MCF 10A (cell line): ENCODE measurements at regions of chr9 and their contacts with region 1.

Region 1: DNA sequence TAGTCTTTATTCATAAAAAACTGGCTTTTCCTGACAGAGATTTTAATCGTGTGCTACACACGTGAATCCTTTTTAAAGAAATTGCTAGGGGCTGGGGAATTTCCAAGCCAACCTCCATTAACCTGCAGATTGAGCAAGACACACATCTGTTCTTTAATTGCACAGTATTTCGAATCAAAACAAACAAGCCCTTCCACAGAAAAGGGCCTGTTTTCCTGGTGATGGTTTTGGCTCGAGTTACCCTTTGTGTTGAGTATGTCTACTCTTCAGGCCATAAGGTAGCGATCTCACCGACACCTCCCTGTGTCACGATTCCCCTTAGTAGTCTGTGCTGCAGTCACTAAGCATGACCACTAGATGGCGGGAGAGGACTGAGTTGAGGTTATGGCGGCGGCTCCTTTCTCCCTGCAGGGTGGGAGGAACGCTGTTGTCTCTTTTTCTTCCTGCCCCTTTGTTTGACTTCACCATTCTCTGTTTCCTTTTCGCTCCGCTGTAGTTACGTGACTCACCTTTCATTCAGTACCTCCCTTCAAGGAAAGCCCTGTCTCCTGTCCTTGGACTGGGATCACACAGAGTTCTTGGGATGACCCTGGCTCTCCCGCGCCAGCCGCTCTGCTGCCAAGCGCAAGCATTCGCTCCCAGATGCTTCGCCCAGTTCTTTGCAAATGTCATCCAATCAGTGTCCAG is 137.1 kb upstream of the SLC24A2 start:
- DNase-seq: peak; percentile 80
- H3K4me3 Mint-ChIP-seq: peak overlapping the region; percentile 60
- H3K27ac Mint-ChIP-seq: no peak overlapping the region
- H3K4me1 Mint-ChIP-seq: no peaks in the 10 kb centered on the region
- H3K27me3 Mint-ChIP-seq: peaks cover 24% of the 10 kb centered on the region
- CTCF ChIP-seq: peak; percentile 95

Region 2: GRCh38 chr9:19313573-19313972 is 612.4 kb before region 1 on chr9:
- CTCF ChIA-PET with region 1: no interaction called
- POLR2A ChIA-PET with region 1: no interaction called
- intact Hi-C with region 1: no loop called
- DNase-seq: no peak
- H3K4me3 Mint-ChIP-seq: no peak overlapping the region
- H3K27ac Mint-ChIP-seq: peak overlapping the region; percentile 25
- H3K4me1 Mint-ChIP-seq: no peaks in the 10 kb centered on the region
- H3K27me3 Mint-ChIP-seq: no peaks in the 10 kb centered on the region
- CTCF ChIP-seq: no peak

Region 3: DNA sequence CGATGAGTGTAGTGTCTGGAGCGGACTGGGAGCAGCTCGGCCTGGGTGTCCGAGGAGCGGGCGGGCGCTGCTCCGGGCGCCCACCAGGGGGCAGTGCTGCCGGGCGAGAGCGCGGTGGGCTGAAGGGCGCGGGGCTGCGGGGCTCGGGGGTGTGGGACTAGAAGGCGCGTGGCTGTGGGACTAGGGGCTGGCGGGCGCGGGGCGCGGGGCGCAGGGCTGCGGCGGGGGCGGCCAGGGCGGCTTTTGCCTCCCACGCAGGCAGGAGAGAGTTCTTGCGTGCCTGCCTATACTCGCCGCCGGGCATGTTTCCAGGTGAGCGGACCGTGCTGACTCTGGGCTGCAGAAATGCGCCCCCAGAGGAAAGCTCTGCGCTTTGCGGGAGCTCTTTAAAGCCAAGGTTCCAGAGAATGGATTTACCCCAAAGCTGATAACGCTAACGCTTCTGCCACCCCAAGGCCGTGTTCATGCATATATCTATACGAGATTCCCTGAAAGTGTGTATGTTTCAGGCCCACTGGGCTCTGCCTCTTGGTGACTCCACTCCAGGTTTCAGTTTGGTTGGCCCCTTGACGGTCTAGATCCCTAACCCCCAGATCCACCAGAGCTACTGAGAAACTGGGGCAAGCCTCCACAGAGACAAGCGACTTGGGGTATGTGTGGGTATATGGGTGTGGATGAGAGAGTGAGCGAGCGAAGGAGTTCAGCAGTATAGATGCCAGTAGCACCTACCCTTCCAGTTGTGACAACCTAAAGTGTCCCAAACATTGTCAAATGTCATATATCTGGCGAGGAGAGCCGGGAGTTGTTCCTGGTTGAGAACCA is 461.0 kb before region 1 on chr9:
- CTCF ChIA-PET with region 1: interaction called, 14 read pairs
- POLR2A ChIA-PET with region 1: no interaction called
- intact Hi-C with region 1: loop called (anchors 1 kb)
- DNase-seq: peak; percentile 66
- H3K4me3 Mint-ChIP-seq: peak overlapping the region; percentile 72
- H3K27ac Mint-ChIP-seq: no peak overlapping the region
- H3K4me1 Mint-ChIP-seq: peaks cover 8% of the 10 kb centered on the region
- H3K27me3 Mint-ChIP-seq: peaks cover 2% of the 10 kb centered on the region
- CTCF ChIP-seq: peak; percentile 80

Region 4: DNA sequence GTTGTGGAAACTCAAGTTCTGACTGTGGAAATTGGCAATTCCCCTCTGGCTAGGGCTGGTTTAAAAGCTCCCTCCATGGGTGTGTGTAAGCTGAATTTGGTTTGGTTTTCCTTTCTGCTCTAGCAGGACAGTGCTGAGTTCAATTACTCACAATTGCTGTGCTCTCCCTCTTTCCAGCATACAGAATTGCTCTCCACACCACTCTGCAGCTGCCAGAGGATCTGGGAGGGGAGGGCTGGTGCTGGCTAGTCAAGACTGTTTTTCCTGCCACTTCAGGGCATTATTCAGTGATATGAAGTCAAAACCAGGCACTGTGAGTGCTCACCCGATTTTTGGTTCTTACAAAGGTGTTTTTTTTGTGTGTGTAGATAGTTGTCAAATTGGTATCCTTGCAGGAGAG is 199.8 kb after region 1 on chr9:
- CTCF ChIA-PET with region 1: no interaction called
- POLR2A ChIA-PET with region 1: no interaction called
- intact Hi-C with region 1: no loop called
- DNase-seq: no peak
- H3K4me3 Mint-ChIP-seq: no peak overlapping the region
- H3K27ac Mint-ChIP-seq: no peak overlapping the region
- H3K4me1 Mint-ChIP-seq: no peaks in the 10 kb centered on the region
- H3K27me3 Mint-ChIP-seq: no peaks in the 10 kb centered on the region
- CTCF ChIP-seq: no peak

Region 5: GRCh38 chr9:20271096-20271495 is 345.1 kb after region 1 on chr9:
- CTCF ChIA-PET with region 1: no interaction called
- POLR2A ChIA-PET with region 1: no interaction called
- intact Hi-C with region 1: loop called (anchors 1 kb)
- DNase-seq: no peak
- H3K4me3 Mint-ChIP-seq: no peak overlapping the region
- H3K27ac Mint-ChIP-seq: no peak overlapping the region
- H3K4me1 Mint-ChIP-seq: peaks cover 11% of the 10 kb centered on the region
- H3K27me3 Mint-ChIP-seq: no peaks in the 10 kb centered on the region
- CTCF ChIP-seq: no peak

Region 6: GRCh38 chr9:20407012-20407411 is 481.1 kb after region 1 on chr9:
- CTCF ChIA-PET with region 1: interaction called, 3 read pairs
- POLR2A ChIA-PET with region 1: no interaction called
- intact Hi-C with region 1: loop called (anchors 5 kb)
- DNase-seq: no peak
- H3K4me3 Mint-ChIP-seq: no peak overlapping the region
- H3K27ac Mint-ChIP-seq: no peak overlapping the region
- H3K4me1 Mint-ChIP-seq: no peaks in the 10 kb centered on the region
- H3K27me3 Mint-ChIP-seq: peaks cover 36% of the 10 kb centered on the region
- CTCF ChIP-seq: peak; percentile 10

Region 7: DNA sequence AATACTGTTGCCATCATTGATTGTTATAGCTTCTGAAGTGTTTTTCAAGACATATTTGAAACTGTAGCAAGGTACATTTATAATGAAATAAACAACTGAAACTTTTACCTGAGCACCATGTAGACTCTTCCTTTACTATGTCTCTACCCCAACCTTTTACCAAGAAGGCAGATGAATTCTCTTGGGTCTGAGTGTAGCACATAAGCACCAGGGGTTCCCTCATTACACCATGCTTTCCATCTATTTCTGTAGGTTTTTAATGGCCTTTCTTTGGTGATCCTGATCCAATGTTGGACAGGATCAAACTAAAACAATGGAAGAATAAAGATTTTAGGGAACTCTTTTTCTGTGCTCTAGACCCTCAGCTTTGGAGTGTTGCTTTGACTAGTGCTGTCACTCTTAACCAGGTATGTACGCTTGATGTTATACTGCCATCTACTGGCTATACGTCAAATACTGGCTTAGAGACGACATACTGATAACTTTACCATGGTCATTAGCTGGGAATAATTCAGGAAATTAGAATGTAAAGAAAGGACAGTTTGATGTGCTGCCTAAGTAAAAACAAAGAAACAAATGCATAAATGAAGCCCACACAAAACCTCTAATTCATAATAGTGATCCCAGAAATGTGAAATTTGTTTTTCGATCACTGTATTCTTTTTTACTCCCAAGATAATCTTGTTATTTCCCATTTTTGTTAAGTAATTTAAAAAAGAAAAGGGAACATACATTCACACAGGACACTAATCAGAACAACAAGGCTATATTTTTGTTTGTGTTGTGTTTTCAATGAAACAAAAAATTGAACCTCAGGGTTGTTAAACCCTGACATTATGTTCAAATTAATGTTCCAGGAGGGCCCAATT is 1185.0 kb after region 1 on chr9:
- CTCF ChIA-PET with region 1: interaction called, 6 read pairs
- POLR2A ChIA-PET with region 1: no interaction called
- intact Hi-C with region 1: loop called (anchors 2 kb)
- DNase-seq: peak; percentile 63
- H3K4me3 Mint-ChIP-seq: no peak overlapping the region
- H3K27ac Mint-ChIP-seq: no peak overlapping the region
- H3K4me1 Mint-ChIP-seq: no peaks in the 10 kb centered on the region
- H3K27me3 Mint-ChIP-seq: peaks cover 25% of the 10 kb centered on the region
- CTCF ChIP-seq: peak; percentile 42